HEK293 (cell line): ENCODE measurements at regions of chrX and their contacts with region 1.

Region 1: DNA sequence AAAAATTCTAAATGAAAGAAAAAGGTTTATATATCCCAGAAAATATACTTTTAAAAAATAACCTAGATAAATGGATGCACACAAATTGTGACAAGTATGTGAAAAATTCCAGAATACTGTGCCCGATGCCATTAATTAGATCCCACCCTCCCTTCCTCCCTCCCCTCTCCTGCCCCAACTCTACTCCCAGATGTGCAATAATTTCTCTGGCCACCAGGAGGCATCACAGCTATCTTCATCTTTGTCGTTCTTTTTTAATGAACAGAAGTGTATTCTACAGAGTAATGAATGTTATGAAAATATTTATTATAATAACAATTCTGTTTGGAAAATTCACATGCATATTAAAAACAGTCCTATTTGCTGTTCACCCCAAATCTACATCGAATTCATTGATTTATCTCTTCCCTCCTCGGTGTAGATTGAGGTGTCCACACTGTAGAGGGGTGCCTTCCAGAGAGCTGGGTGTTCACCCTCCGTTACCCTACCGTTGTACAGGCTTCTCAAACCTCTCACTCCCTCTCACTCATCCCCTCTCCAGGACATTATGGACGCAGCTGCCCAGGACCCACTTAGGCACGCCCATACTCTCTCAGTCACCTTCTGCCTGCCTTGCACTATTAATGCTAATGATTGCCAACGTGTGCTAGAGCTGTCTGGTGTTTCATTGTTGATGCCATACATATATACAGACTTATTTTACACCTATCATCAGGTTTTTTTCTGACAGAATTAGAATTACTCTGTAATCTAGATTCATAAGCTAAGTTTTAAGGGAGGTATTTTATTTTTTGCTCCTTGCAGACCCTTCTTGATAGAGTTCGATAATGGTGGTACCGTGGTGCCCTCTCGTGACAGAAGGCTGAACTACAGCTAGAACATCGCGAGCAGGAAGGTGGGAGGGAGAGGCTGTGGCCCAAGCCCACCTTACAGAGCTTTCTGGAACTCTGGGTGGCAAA is 14.1 kb downstream of the RAB40AL start:
- H3K4me3 ChIP-seq: peak overlapping the region; percentile 37
- H3K27ac ChIP-seq: no peak overlapping the region
- H3K4me1 ChIP-seq: no peaks in the 10 kb centered on the region
- CTCF ChIP-seq: no peak

Region 2: GRCh38 chrX:102934624-102935023 is 16.6 kb before region 1 on chrX:
- CTCF ChIA-PET with region 1: interaction called, 57 read pairs
- POLR2A ChIA-PET with region 1: no interaction called
- H3K4me3 ChIP-seq: no peak overlapping the region
- H3K27ac ChIP-seq: no peak overlapping the region
- H3K4me1 ChIP-seq: no peaks in the 10 kb centered on the region
- CTCF ChIP-seq: peak; percentile 26; the same call in 1 of the 2 replicates

Region 3: DNA sequence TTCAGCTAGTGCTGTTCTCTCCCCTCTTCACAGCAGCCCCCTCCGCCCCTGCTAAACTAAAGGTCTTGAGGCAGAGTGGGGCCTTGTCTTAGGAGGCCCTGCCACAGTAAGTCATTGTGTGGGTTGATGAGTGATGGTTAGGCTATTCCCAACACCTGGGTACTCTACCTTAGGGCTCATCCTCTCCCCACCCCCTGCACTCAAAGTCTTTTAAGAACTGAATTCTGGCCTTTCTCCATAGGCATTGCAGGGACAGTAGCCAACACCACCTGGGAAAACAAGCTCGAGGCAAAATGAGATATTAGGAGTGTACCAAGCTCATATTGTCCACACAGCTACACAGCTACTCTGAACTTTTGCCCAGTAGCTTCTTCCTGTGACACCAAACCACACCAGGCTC is 28.3 kb after region 1 on chrX:
- CTCF ChIA-PET with region 1: interaction called, 10 read pairs
- POLR2A ChIA-PET with region 1: interaction called, 5 read pairs
- H3K4me3 ChIP-seq: no peak overlapping the region
- H3K27ac ChIP-seq: no peak overlapping the region
- H3K4me1 ChIP-seq: no peaks in the 10 kb centered on the region
- CTCF ChIP-seq: no peak

Region 4: DNA sequence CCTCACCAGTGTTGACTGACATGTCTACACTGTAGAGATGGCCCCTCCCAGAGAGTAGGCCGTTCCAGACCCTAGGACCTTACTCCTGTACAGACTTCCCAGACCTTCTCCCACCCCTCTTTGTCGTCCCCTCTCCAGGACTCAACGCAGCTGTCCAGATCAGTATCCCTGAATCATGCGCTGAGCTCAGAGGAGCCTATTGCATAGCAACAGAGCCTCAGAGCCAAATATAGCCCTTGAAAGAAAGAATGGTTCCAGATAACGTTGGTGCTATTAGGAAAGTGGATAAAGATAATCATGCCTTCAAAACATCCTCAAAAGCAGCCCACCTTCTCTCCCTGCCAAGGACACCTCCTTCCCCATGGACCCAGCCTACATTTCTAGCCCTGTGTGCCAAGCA is 169.6 kb after region 1 on chrX:
- CTCF ChIA-PET with region 1: no interaction called
- POLR2A ChIA-PET with region 1: no interaction called
- H3K4me3 ChIP-seq: no peak overlapping the region
- H3K27ac ChIP-seq: no peak overlapping the region
- H3K4me1 ChIP-seq: no peaks in the 10 kb centered on the region
- CTCF ChIP-seq: no peak

Region 5: GRCh38 chrX:103175944-103176753 is 225.0 kb after region 1 on chrX:
- CTCF ChIA-PET with region 1: interaction called, 49 read pairs
- POLR2A ChIA-PET with region 1: no interaction called
- H3K4me3 ChIP-seq: peak overlapping the region; percentile 21
- H3K27ac ChIP-seq: no peak overlapping the region
- H3K4me1 ChIP-seq: no peaks in the 10 kb centered on the region
- CTCF ChIP-seq: peak; percentile 66; the same call in 1 of the 2 replicates